ENCODE measurements at regions of chr14 and their contacts with region 1.

Region 1: DNA sequence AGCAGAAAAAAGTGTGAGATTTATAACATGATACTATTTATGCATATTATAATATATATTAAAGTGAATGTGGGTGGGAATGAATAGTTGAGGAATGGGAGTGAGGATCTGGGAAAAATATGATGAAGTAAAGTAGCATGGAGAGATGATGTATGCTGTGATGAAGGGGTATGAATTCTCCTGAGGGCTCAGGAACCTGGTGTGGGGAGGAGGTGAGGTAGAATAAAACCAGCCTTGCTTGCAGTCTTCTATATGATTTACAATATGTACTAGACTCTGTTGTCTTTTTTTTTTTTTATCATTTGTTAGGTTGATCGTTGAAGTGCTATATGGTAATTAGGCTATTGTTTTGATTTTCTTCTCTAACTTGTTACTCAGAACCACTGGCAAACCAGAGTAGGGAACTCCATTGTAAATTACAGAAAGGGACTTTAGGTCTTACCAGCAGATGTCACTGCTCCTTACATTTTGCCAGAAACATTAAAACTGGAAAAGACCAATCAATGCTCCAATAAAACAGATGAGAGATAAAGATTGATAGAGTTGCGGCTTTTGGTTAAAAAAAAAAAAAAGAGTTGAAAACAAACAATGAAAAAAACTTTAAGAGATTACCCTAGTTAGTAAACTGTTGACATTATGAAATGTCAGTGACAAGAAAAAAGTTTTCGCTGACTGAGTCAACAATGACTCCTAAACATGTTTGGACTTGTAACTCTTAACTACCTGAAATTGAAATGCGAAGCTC is 39.9 kb downstream of the ATL1 start:
- DNase-seq: peak in 1 of 2 experiments; percentile 37
- H3K4me3 ChIP-seq: no peak overlapping the region
- H3K4me3 Mint-ChIP-seq: peak overlapping the region; percentile 30
- H3K27ac Mint-ChIP-seq: no peak overlapping the region
- H3K4me1 ChIP-seq: no peaks in the 10 kb centered on the region
- H3K4me1 Mint-ChIP-seq: peaks cover 9% of the 10 kb centered on the region
- H3K27me3 ChIP-seq: no peaks in the 10 kb centered on the region
- H3K27me3 Mint-ChIP-seq: no peaks in the 10 kb centered on the region
- CTCF ChIP-seq: peak; percentile 52 to 55

Region 2: DNA sequence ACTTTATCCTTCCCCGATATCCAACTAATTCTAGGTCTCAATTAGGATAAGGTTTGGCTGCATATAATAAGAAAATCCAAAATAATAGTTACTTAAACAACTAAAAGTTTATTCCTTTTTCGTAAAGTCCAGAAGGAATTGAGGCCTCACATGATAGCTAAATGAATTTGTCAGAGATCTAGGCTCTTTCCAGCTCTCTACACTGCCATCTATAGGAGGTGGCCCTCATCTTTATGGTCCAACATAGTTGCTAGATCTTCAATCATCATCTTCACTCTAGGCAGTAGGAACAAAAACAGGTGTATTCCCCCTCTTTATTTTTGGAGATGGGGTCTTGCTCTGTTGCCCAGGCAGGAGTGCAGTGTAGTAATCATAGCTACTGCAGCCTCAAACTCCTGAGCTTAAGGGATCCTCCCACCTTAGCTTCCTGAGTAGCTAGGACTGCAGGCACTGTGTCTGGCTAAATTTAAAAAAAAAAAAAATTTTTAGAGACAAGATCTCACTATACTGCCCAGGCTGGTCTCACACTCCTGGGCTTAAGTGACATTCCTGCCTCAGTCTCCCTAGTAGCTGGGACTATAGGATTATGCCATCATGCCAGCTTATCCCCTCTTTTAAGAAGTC is 114.7 kb after region 1 on chr14:
- CTCF ChIA-PET with region 1: interaction called, 12 read pairs
- POLR2A ChIA-PET with region 1: no interaction called
- intact Hi-C with region 1: no loop called
- DNase-seq: peak in 1 of 2 experiments; percentile 34
- H3K4me3 ChIP-seq: no peak overlapping the region
- H3K4me3 Mint-ChIP-seq: no peak overlapping the region
- H3K27ac Mint-ChIP-seq: no peak overlapping the region
- H3K4me1 ChIP-seq: no peaks in the 10 kb centered on the region
- H3K4me1 Mint-ChIP-seq: no peaks in the 10 kb centered on the region
- H3K27me3 ChIP-seq: no peaks in the 10 kb centered on the region
- H3K27me3 Mint-ChIP-seq: no peaks in the 10 kb centered on the region
- CTCF ChIP-seq: peak; percentile 10 to 66

Region 3: DNA sequence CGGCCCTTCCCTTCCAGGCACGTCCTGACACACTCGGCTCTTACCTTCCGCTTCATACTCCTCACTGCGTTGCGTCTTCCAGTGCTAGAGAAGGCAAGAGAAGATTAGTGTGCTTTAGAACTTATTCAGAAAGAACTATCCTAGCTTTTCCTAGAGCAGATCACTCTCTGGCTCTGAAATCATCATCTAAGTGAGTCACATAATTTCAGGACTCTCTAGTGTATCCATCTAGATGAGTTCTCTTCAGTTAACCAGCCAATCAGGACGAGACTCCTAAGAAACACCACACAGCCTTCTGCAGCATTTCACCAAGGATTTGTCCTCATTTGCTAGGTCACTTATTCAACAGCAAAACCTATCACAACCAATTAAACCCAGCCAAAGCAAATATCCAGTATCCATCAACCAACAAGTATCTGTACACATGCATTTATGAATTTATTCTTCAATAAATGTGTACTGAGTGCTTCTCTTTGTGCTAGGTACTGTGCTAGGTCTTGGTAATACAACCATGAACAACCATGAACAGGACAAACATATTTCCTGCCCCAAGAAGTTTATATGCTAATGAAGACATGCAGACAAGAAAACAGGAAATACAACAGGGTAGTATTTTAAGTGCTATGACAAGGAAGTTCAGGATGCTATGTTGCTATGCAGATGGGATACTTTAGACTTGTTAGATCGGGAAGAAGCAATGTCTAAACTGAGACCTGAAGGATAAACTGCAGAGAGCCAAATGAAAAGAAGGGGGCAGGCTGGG is 179.0 kb after region 1 on chr14:
- CTCF ChIA-PET with region 1: interaction called, 7 read pairs
- POLR2A ChIA-PET with region 1: no interaction called
- intact Hi-C with region 1: loop called (anchors 1 kb)
- DNase-seq: no peak
- H3K4me3 ChIP-seq: no peak overlapping the region
- H3K4me3 Mint-ChIP-seq: no peak overlapping the region
- H3K27ac Mint-ChIP-seq: no peak overlapping the region
- H3K4me1 ChIP-seq: no peaks in the 10 kb centered on the region
- H3K4me1 Mint-ChIP-seq: no peaks in the 10 kb centered on the region
- H3K27me3 ChIP-seq: no peaks in the 10 kb centered on the region
- H3K27me3 Mint-ChIP-seq: no peaks in the 10 kb centered on the region
- CTCF ChIP-seq: no peak

Measured in Caco-2 (cell line).